Thyroid gland (tissue), 4 donors: ENCODE measurements at regions of chr1 and their contacts with region 1.

Region 1: GRCh38 chr1:32876341-32877210 is 5.9 kb upstream of the FNDC5 start:
- DNase-seq: peak; percentile 45
- H3K4me3 ChIP-seq: no peak overlapping the region
- H3K27ac ChIP-seq: no peak overlapping the region
- H3K4me1 ChIP-seq: peaks cover 0 to 14% of the 10 kb centered on the region in 2 donors
- H3K27me3 ChIP-seq: no peaks in the 10 kb centered on the region
- CTCF ChIP-seq: peak in 5 of 6 experiments; percentile 38 to 84 (median 68)
- POLR2A ChIP-seq: no peak

Region 2: DNA sequence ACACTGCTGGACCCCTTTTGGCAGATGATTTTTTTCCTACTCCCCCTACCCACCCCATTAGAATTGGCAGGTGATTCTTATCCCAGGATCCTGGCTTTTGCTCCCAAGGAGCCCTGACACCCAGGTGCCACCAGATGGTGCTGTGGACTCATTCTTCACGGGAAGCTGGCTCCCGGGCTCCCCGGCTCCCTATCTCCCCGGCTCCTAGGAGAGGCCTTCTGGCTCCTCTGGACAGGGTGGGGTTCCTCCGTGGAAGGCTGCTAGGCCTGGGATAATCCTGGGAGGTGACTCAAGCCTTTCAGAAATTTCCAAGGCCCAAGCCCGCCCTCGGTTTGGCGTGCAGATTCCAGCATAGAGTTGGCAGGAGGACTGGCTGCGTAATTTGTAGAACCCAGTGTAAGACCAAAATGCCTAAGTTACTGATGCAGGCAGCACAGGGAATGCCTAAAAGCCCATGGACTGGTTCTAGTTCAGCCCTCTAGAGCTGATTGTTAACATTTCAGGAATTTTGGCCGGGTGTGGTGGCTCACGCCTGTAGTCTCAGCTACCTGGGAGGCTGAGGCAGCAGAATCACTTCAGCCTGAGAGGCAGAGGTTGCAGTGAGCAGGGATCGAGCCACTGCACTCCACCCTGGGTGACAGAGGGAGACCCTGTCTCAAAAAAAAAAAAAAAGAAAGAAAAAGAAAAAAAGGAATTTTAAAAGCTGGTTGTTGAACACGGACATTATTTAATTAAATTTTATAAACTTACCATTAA is 475.5 kb before region 1 on chr1:
- intact Hi-C with region 1: loop called (anchors 10 kb)
- DNase-seq: peak; percentile 84 to 87
- H3K4me3 ChIP-seq: no peak overlapping the region
- H3K27ac ChIP-seq: peak overlapping the region in 1 of 3 donors; percentile 33
- H3K4me1 ChIP-seq: peaks cover 0 to 3% of the 10 kb centered on the region in 2 donors
- H3K27me3 ChIP-seq: no peaks in the 10 kb centered on the region
- CTCF ChIP-seq: peak; percentile 50 to 94 (median 85)
- POLR2A ChIP-seq: no peak

Region 3: GRCh38 chr1:32516402-32516801 is 360.2 kb before region 1 on chr1:
- intact Hi-C with region 1: loop called (anchors 10 kb)
- DNase-seq: no peak
- H3K4me3 ChIP-seq: no peak overlapping the region
- H3K27ac ChIP-seq: no peak overlapping the region
- H3K4me1 ChIP-seq: no peaks in the 10 kb centered on the region
- H3K27me3 ChIP-seq: no peaks in the 10 kb centered on the region
- CTCF ChIP-seq: no peak
- POLR2A ChIP-seq: no peak